ENCODE measurements at regions of chr10 and their contacts with region 1.

Region 1: GRCh38 chr10:76514321-76514720 is 1082.9 kb downstream of the LRMDA start:
- DNase-seq: no peak
- H3K4me3 ChIP-seq: no peak overlapping the region
- H3K27ac ChIP-seq: no peak overlapping the region
- H3K4me1 ChIP-seq: no peaks in the 10 kb centered on the region
- H3K27me3 ChIP-seq: no peaks in the 10 kb centered on the region
- CTCF ChIP-seq: no peak
- EP300 ChIP-seq: no peak
- POLR2A ChIP-seq: no peak

Region 2: DNA sequence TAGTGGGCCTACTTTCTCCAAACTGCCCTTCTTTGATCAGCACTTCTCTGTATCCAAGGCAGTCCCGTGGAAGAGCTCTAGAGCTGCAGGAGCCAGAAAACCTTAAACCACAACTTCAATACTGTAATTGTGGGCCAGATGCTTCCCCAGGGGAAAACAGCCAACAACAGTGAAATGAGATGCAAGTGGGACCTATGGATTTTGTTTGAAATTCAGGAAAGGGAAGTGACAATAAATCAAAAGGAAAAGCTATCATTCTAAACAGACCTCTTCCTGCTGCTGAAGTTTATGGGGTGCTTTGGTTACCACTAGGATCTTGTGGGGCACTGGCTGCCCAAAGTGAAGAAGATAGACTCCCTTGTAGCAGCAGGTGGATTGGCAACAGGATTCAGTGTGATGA is 51.2 kb before region 1 on chr10:
- intact Hi-C with region 1: loop called (anchors 10 kb)
- DNase-seq: no peak
- H3K4me3 ChIP-seq: no peak overlapping the region
- H3K27ac ChIP-seq: no peak overlapping the region
- H3K4me1 ChIP-seq: peaks cover 0 to 48% (median 30%) of the 10 kb centered on the region in 4 donors
- H3K27me3 ChIP-seq: no peaks in the 10 kb centered on the region
- CTCF ChIP-seq: no peak
- EP300 ChIP-seq: no peak
- POLR2A ChIP-seq: no peak

Measured in sigmoid colon (tissue), 7 donors.